Activated naive CD4-positive, alpha-beta T cell treated with anti-CD3 and anti-CD28 coated beads for 36 hours (primary cell): ENCODE measurements at regions of chr3 and their contacts with region 1.

Region 1: DNA sequence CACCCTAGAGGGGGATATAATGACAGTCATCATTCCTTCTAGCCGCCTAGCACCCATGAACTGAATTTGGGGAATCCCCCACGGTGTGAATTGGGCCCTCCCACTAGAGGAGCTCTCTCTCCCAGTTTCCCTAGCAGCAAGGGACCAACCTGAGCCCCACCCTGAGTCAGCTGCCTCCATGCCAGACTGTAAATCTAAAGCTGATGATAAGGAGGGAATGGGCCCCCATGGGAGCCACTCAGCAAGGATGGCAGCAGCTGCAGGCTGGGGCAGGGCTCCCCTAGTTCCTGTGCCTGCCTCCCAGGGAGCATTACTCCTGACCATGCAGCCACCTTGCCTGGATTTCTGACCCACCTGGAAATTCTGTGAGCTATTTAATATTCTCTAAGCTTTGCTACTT is 57.0 kb upstream of the PXYLP1 start:
- DNase-seq: no peak
- H3K4me3 Mint-ChIP-seq: no peak overlapping the region
- H3K27ac Mint-ChIP-seq: no peak overlapping the region
- H3K4me1 Mint-ChIP-seq: no peaks in the 10 kb centered on the region
- H3K27me3 Mint-ChIP-seq: no peaks in the 10 kb centered on the region

Region 2: DNA sequence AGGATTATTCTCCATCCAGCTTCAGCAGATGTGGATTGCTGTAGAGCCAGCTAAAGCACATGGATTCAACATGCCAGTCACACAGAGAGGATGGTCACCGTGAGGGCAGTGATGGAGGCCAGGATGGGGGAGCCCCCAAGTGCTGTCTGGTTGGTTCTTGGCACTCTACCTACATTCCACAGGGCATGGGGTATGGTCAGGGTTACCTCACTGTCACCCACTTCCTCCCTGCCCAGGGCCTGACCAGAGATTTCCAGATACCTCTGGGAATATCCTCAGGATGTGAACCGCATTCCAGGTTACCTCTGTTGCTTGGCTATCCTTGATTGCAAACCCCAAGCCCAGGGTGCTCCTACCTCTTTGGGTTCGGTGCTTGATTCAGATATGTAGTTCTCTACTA is 644.1 kb before region 1 on chr3:
- CTCF ChIA-PET with region 1: no interaction called
- intact Hi-C with region 1: loop called (anchors 5 kb)
- DNase-seq: no peak
- H3K4me3 Mint-ChIP-seq: no peak overlapping the region
- H3K27ac Mint-ChIP-seq: no peak overlapping the region
- H3K4me1 Mint-ChIP-seq: no peaks in the 10 kb centered on the region
- H3K27me3 Mint-ChIP-seq: no peaks in the 10 kb centered on the region

Region 3: GRCh38 chr3:140816372-140817195 is 358.1 kb before region 1 on chr3:
- CTCF ChIA-PET with region 1: no interaction called
- intact Hi-C with region 1: no loop called
- DNase-seq: no peak
- H3K4me3 Mint-ChIP-seq: no peak overlapping the region
- H3K27ac Mint-ChIP-seq: no peak overlapping the region
- H3K4me1 Mint-ChIP-seq: no peaks in the 10 kb centered on the region
- H3K27me3 Mint-ChIP-seq: peaks cover 7% of the 10 kb centered on the region

Region 4: DNA sequence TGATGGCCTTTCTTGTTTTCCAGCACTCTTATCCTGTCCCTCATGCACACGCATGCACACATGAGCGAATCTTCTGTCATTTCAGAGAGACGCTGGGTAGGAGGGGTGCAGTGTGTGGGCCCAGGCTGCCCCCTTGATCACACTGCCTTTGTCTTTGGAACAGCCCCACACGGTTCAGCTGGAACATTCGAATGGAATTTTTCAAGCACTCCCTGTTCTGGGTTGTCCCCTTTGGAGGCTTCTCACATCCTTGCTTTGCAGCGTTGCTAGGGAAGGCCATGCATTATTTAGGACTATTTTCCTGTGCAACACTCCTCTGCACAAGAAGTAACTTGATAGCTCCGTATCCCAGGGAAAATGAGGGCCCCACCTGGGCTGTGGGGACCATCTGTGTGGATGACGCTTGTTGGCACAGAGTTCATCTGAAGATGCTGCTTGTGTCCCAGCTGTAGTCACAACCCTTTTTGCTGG is 45.1 kb before region 1 on chr3:
- CTCF ChIA-PET with region 1: no interaction called
- intact Hi-C with region 1: no loop called
- DNase-seq: no peak
- H3K4me3 Mint-ChIP-seq: no peak overlapping the region
- H3K27ac Mint-ChIP-seq: no peak overlapping the region
- H3K4me1 Mint-ChIP-seq: no peaks in the 10 kb centered on the region
- H3K27me3 Mint-ChIP-seq: no peaks in the 10 kb centered on the region